ENCODE measurements at regions of chr12 and their contacts with region 1.

Region 1: DNA sequence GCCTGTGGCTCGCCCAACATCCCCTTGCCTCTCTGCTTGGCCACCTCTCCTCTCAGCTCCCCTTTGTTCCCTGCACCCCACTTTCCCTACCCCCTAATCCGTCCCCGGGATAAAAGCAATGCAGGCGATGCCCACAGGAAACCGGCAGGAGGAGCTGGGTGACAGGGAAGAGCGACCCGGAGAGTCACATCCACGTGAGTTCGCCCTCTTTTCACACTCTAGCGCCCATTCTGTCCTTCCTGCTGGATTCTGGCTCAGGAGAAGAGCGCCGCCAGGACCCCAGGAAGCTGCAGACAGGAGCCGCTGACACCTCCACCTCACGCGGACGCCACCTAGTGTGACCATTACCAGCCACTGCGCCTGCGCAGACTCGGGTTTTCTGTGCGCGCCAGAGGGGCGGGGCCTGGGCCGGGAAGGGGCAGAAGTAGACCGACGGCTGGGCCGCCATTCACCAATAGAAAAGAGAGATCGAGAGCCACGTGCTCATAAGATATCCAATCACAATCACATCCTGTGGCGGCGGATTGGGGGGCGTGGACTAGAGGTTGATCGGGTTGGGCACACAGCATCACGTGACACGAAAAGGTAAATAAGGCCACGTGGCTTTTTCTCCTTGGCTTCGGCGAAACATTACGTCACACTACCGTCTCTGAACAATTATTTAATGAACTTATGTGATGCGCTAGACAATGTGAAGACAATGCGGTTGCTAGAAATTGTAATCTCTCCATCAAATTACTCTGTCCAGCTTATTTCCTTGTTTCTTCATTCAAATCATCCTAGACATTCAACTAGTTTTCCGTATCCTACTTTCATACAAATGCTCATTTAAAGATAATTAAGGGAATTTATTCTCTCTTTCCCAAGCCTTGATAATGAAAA is 10.1 kb downstream of the PLA2G1B start:
- DNase-seq: peak; percentile 100
- H3K4me3 ChIP-seq: peak overlapping the region; percentile 40 to 68 (median 63)
- H3K27ac ChIP-seq: peak overlapping the region; percentile 83 to 90 (median 84)
- H3K4me1 ChIP-seq: peaks cover 0 to 11% (median 6%) of the 10 kb centered on the region in 4 donors
- H3K27me3 ChIP-seq: no peaks in the 10 kb centered on the region
- CTCF ChIP-seq: peak; percentile 61 to 91 (median 77)
- EP300 ChIP-seq: no peak
- POLR2A ChIP-seq: peak; percentile 59 to 87

Region 2: DNA sequence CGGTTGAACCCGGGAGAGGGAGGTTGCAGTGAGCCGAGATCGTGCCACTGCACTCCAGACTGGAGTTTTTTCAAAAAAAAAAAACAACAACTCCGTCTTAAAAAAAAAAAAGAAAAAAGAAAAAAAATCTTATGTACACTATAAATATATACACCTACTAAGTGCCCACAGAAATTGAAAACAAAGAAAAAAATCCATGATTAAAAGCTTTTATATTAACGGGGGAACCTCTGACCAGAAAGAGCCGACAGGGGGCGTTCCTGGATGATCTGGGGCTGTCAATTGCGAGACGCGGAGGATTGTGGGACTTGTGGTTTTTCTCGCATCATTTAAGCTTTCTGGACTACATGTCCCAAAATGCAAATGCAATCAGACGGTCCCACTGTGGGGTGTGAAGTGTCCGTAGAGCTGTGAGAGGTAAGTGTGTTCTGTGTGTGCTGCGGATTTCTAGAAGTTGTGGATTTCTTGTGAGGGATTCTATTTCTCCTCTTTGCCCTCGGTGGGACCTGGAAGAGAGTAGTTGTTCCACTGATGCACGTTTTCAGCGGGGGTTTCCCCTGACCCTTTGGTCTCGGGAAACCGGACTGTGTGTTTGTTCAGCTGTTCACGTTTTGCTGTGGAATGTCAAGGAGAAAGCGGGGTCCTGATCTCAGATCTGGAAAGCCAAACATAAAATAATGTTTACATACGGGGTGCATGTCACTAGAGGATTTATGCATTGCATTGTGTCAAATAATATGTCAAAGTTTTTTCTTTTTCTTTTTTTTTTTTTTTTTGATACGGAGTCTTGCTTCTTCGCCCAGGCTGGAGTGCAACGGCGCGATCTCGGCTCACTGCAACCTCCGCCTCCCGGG is 15.3 kb before region 1 on chr12 and contains the start of gene SIRT4:
- intact Hi-C with region 1: loop called (anchors 1 kb)
- DNase-seq: peak; percentile 92
- H3K4me3 ChIP-seq: peak within 1 kb of the TSS; percentile 56 to 66 (median 60)
- H3K27ac ChIP-seq: peak within 1 kb of the TSS; percentile 75 to 79 (median 78)
- H3K4me1 ChIP-seq: peaks cover 0 to 11% (median 7%) of the 10 kb centered on the region in 4 donors
- H3K27me3 ChIP-seq: no peaks in the 10 kb centered on the region
- CTCF ChIP-seq: peak in 3 of 4 experiments; percentile 45 to 65 (median 63)
- EP300 ChIP-seq: no peak
- POLR2A ChIP-seq: no peak
- total RNA-seq, gene SIRT4: 2.8 to 3.6 (median 3.2) TPM

Measured in sigmoid colon (tissue), 7 donors.